ENCODE measurements at regions of chrX and their contacts with region 1.

Region 1: DNA sequence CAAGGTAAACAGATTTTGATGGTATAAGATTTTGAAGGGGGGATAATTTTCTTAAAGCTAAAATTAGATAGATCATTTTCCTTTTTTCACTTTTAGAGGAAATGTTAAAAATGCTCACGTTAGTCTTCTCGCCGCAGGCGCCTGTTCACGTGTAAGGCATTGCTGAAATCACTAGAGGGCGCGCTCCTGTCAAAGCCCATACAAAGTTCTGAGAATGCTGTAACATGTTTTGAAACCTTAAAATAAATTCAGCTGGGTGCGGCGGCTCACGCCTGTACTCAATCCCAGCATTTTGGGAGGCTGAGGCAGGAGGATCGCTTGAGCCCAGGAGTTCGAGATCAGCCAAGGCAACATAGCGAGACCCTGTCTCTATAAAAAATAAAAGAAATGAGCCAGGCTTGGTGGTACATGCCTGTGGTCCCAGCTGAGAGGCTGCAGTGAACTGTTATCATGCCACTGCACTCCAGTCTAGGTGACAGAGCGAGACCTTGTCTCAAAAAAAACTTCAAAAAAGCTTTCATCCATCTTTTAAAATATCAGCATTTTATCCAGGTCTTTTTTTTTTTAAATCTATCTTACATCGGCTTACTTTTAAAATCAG is 138.0 kb downstream of the RBMX2 start:
- DNase-seq: peak; percentile 55
- ATAC-seq: no peak
- H3K4me3 Mint-ChIP-seq: no peak overlapping the region
- H3K27ac Mint-ChIP-seq: no peak overlapping the region
- H3K4me1 Mint-ChIP-seq: no peaks in the 10 kb centered on the region
- H3K27me3 Mint-ChIP-seq: peaks cover 11% of the 10 kb centered on the region

Region 2: DNA sequence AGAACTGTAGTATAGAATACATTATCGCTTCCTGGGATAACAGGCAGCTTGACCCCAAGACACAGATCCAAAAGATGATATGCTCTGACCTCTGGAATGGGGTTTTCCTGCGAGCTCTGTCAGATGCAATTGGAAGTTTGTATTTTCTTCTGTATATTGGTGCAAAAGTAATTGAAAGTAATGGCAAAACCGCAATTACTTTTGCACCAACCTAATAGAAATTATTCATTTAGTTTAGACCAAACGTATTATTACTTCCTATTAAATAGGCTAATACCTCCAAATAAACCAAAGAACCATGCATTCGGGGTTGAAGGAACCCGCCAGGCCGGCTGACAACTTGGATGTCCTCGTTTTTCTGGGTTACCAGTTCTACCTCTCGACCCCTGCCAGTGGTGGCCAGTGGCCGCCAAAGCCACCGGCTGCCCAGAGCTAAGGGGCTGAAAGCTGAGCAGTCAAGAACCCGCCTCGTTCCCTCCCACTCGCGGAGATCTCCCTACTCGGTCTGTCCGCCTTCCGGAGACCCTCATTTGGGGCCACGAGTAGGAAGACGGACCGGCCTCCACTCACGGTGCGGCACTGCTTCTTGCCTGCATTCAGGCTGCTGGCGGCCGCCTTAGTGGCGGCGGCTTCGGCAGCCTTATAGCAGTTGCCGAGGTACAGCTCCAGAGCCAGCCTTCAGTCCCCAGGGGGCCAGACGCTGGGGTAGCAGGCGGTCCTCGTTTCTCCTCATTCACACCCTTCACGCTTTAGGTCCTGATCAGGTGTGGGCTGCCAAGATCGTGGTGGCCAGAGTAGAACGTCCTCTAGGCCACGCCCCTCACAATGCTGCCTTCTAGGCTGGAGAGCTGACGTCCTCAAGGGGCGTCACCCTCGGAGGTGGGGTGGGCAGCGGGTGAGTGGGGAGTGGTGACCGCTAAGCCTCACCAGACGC is 16.1 kb before region 1 on chrX:
- CTCF ChIA-PET with region 1: no interaction called
- DNase-seq: no peak
- ATAC-seq: no peak
- H3K4me3 Mint-ChIP-seq: no peak overlapping the region
- H3K27ac Mint-ChIP-seq: no peak overlapping the region
- H3K4me1 Mint-ChIP-seq: no peaks in the 10 kb centered on the region
- H3K27me3 Mint-ChIP-seq: peaks cover 3% of the 10 kb centered on the region

Region 3: GRCh38 chrX:130916636-130917422 is 377.0 kb after region 1 on chrX:
- CTCF ChIA-PET with region 1: interaction called, 19 read pairs
- DNase-seq: peak; percentile 40
- ATAC-seq: no peak
- H3K4me3 Mint-ChIP-seq: no peak overlapping the region
- H3K27ac Mint-ChIP-seq: no peak overlapping the region
- H3K4me1 Mint-ChIP-seq: no peaks in the 10 kb centered on the region
- H3K27me3 Mint-ChIP-seq: no peaks in the 10 kb centered on the region